ENCODE measurements at regions of chr12 and their contacts with region 1.

Region 1: DNA sequence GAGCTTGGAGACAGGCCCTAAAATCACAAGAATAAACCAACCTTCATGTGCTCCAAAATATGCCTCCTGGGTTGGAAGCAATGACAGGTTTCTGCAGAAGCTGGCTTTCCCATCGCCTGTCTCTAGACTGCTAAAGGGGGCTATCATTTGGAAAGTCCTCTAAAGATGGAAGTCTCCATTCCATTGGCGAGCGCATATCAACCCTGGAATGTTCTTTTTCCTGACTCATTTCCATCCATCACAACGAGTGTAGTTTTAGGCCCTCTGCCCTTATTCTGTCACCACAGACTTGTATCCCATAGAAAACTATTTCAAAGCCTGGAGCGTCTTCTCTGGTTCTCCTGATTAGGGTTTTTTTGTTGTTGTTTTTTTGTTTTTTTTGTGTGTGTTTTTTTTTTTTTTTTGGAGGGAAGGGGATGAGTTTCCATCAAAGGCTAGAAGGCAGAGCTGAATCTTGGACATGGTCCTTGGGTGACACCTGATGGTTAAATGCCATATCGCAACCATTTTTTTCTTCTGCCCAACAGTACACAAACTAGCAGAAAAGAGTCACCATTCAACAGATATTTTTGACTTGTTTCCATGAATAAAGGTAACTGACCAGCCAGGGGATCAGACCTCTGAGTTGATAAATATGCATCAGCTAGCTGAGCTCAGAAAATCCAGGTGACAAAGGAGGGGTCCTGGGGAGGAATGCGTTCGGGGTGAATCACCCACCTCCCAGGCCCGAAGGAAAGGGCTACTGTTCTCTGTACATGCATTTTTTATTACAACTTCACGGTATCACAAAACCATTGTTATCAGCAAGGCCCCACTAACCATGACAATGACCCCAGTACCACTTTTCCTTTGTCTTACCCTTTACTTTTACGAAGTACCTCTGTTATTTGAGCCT is 40.5 kb downstream of the KCNA5 start:
- DNase-seq: peak; percentile 47
- H3K4me3 Mint-ChIP-seq: no peak overlapping the region
- H3K27ac Mint-ChIP-seq: no peak overlapping the region
- H3K4me1 Mint-ChIP-seq: no peaks in the 10 kb centered on the region
- H3K27me3 Mint-ChIP-seq: peaks cover 3% of the 10 kb centered on the region

Region 2: DNA sequence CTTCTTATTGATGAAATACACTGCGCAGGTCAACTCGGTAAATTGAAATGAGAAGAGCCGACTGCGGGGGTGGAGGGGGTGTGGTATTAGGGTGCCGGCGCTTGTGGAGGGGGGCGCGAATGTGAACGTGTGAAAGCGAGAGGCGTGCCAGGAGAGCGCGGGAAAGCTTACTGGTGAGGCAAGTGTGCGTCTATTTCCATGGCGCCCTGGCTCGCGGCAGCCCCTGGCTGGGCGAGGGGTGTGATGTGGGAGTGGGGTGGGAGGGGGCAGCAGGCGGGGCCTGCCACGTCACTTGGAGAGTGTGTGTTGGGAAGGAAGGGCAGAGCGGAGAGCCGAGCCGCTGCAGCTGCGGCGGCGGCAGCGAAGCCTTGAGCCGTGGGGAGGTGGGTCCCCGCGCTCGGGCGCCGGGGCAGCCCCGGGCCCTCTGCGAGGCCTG is 275.2 kb before region 1 on chr12:
- CTCF ChIA-PET with region 1: no interaction called
- intact Hi-C with region 1: no loop called
- DNase-seq: no peak
- H3K4me3 Mint-ChIP-seq: no peak overlapping the region
- H3K27ac Mint-ChIP-seq: no peak overlapping the region
- H3K4me1 Mint-ChIP-seq: peaks cover 27% of the 10 kb centered on the region
- H3K27me3 Mint-ChIP-seq: peaks cover 31% of the 10 kb centered on the region

Region 3: GRCh38 chr12:5022465-5023061 is 61.6 kb before region 1 on chr12:
- CTCF ChIA-PET with region 1: interaction called, 24 read pairs
- intact Hi-C with region 1: loop called (anchors 1 kb)
- DNase-seq: peak; percentile 54
- H3K4me3 Mint-ChIP-seq: no peak overlapping the region
- H3K27ac Mint-ChIP-seq: no peak overlapping the region
- H3K4me1 Mint-ChIP-seq: no peaks in the 10 kb centered on the region
- H3K27me3 Mint-ChIP-seq: peaks cover 16% of the 10 kb centered on the region